Activated naive CD4-positive, alpha-beta T cell treated with anti-CD3 and anti-CD28 coated beads for 36 hours (primary cell): ENCODE measurements at regions of chr11 and their contacts with region 1.

Region 1: DNA sequence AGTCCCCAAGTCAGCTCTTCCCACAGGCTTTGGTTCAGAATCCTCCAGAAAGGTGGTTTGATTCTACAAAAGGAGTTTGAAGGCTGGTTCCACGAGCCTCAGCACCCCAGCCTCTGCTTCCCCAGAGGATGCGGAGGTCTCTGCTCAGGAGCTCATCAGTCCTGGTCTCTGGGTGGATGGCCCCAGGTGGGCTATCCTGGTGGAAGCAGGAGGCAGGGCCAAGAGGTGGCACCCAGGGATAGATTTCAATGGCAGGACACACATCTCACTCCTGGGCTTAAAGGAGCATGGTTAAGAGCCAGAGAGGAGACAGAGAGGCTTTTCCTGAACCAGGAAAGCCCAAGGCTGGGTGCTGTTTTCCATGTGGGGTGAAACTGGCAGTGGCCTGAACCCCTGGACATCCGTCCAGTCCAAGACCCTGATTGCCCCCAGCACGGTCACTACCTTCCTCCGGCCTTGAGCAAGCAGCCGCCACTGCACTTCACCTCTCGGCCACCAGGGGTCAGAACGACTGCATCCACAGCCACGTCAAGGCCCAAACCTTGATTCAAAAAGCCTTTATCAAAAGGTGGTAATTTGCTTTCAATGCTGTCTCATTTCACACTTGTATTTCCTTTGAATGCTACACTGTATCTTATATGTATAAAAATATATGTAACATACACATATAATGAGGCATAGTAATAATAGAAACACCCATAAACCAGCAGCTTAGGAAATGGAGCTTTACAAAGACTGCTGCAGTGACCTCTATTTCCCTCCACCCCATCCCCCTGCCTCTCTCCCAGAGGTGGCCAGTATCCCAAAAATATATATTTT is 19.3 kb upstream of the FXYD2 start:
- DNase-seq: peak; percentile 90
- H3K4me3 Mint-ChIP-seq: no peak overlapping the region
- H3K27ac Mint-ChIP-seq: no peak overlapping the region
- H3K4me1 Mint-ChIP-seq: no peaks in the 10 kb centered on the region
- H3K27me3 Mint-ChIP-seq: no peaks in the 10 kb centered on the region

Region 2: GRCh38 chr11:117426269-117426685 is 417.6 kb before region 1 on chr11:
- CTCF ChIA-PET with region 1: no interaction called
- intact Hi-C with region 1: no loop called
- DNase-seq: peak; percentile 84
- H3K4me3 Mint-ChIP-seq: no peak overlapping the region
- H3K27ac Mint-ChIP-seq: no peak overlapping the region
- H3K4me1 Mint-ChIP-seq: no peaks in the 10 kb centered on the region
- H3K27me3 Mint-ChIP-seq: peaks cover 4% of the 10 kb centered on the region

Region 3: GRCh38 chr11:117828611-117829368 is 15.1 kb before region 1 on chr11:
- CTCF ChIA-PET with region 1: interaction called, 15 read pairs
- intact Hi-C with region 1: loop called (anchors 1 kb)
- DNase-seq: peak; percentile 92
- H3K4me3 Mint-ChIP-seq: no peak overlapping the region
- H3K27ac Mint-ChIP-seq: peak overlapping the region; percentile 46
- H3K4me1 Mint-ChIP-seq: peaks cover 50% of the 10 kb centered on the region
- H3K27me3 Mint-ChIP-seq: no peaks in the 10 kb centered on the region

Region 4: GRCh38 chr11:117907251-117907981 is 63.5 kb after region 1 on chr11:
- CTCF ChIA-PET with region 1: interaction called, 5 read pairs
- intact Hi-C with region 1: loop called (anchors 1 kb)
- DNase-seq: peak; percentile 79
- H3K4me3 Mint-ChIP-seq: peak overlapping the region; percentile 57
- H3K27ac Mint-ChIP-seq: no peak overlapping the region
- H3K4me1 Mint-ChIP-seq: peaks cover 8% of the 10 kb centered on the region
- H3K27me3 Mint-ChIP-seq: no peaks in the 10 kb centered on the region

Region 5: GRCh38 chr11:118263695-118264567 is 420.1 kb after region 1 on chr11 and contains the start of gene MPZL2:
- CTCF ChIA-PET with region 1: no interaction called
- intact Hi-C with region 1: no loop called
- DNase-seq: peak; percentile 73
- H3K4me3 Mint-ChIP-seq: peak within 1 kb of the TSS; percentile 86
- H3K27ac Mint-ChIP-seq: peak within 1 kb of the TSS; percentile 68
- H3K4me1 Mint-ChIP-seq: peaks cover 39% of the 10 kb centered on the region
- H3K27me3 Mint-ChIP-seq: no peaks in the 10 kb centered on the region
- total RNA-seq, gene MPZL2: 25.3 to 28.4 TPM